Posterior vena cava (tissue), 2 donors: ENCODE measurements at regions of chr10 and their contacts with region 1.

Region 1: DNA sequence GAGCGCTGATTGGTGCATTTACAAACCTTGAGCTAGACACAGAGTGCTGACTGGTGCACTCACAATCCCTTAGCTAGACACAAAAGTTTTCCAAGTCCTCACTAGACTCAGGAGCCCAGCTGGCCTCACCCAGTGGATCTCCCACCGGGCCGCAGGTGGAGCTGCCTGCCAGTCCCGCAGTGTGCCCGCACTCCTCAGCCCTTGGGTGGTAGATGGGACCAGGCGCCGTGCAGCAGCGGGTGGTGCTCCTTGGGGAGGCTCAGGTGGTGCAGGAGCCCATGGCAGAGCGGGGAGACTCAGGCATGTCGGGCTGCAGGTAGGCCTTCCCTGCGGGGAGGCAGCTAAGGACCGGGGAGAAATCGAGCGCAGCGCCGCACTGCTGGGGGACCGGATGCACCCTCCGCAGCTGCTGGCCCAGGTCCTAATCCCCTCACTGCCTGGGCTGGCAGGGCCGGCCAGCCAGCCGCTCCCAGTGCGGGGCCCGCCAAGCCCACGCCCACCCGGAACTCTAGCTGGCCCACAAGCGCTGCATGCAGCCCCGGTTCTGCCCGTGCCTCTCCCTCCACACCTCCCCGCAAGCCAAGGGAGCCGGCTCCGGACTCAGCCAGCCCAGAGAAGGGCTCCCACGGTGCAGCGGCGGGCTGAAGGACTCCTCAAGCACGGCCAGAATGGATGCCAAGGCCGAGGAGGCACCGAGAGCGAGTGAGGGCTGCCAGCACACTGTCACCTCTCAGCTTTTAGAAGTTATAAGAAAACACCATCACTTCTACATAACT is 128.9 kb downstream of the ZNF438 start:
- DNase-seq: peak; percentile 79

Region 2: DNA sequence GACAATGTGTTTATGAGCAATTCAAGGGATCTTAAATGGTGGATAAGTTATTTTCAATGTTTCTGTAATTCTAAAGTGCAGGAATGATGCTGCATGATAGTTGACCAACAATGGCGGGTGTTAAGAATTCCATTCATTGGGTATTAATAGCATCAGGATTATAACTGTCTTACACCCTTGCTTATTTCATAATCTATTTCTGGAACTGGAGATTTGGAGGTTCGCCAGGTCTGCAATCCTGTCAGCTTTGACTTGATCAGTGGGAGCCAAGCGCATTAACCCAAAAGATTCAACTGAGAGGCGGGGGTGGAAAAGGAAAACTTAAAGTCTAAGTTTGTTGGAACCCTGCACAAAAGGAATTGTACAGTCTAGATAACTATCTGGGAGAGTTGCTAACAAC is 301.3 kb after region 1 on chr10:
- intact Hi-C with region 1: loop called in 1 of 2 experiments (anchors 10 kb)
- DNase-seq: no peak